ENCODE measurements at regions of chr18 and their contacts with region 1.

Region 1: GRCh38 chr18:45316127-45316526 is 299.1 kb upstream of the SLC14A2 start:
- DNase-seq: no peak
- ATAC-seq: no peak
- H3K4me3 Mint-ChIP-seq: no peak overlapping the region
- H3K27ac Mint-ChIP-seq: no peak overlapping the region
- H3K4me1 Mint-ChIP-seq: no peaks in the 10 kb centered on the region
- H3K27me3 Mint-ChIP-seq: peaks cover 7% of the 10 kb centered on the region

Region 2: GRCh38 chr18:45136381-45137086 is 179.6 kb before region 1 on chr18:
- CTCF ChIA-PET with region 1: no interaction called
- POLR2A ChIA-PET with region 1: no interaction called
- intact Hi-C with region 1: no loop called
- DNase-seq: no peak
- ATAC-seq: no peak
- H3K4me3 Mint-ChIP-seq: no peak overlapping the region
- H3K27ac Mint-ChIP-seq: no peak overlapping the region
- H3K4me1 Mint-ChIP-seq: no peaks in the 10 kb centered on the region
- H3K27me3 Mint-ChIP-seq: no peaks in the 10 kb centered on the region

Region 3: GRCh38 chr18:45291621-45292615 is 24.2 kb before region 1 on chr18:
- CTCF ChIA-PET with region 1: no interaction called
- POLR2A ChIA-PET with region 1: no interaction called
- intact Hi-C with region 1: loop called in 1 of 2 experiments (anchors 2 kb)
- DNase-seq: no peak
- ATAC-seq: no peak
- H3K4me3 Mint-ChIP-seq: no peak overlapping the region
- H3K27ac Mint-ChIP-seq: no peak overlapping the region
- H3K4me1 Mint-ChIP-seq: no peaks in the 10 kb centered on the region
- H3K27me3 Mint-ChIP-seq: no peaks in the 10 kb centered on the region

Region 4: GRCh38 chr18:45526114-45526841 is 210.2 kb after region 1 on chr18:
- CTCF ChIA-PET with region 1: no interaction called
- POLR2A ChIA-PET with region 1: no interaction called
- intact Hi-C with region 1: no loop called
- DNase-seq: no peak
- ATAC-seq: no peak
- H3K4me3 Mint-ChIP-seq: no peak overlapping the region
- H3K27ac Mint-ChIP-seq: no peak overlapping the region
- H3K4me1 Mint-ChIP-seq: no peaks in the 10 kb centered on the region
- H3K27me3 Mint-ChIP-seq: peaks cover 9% of the 10 kb centered on the region

Measured in activated CD4-positive, alpha-beta T cell treated with anti-CD3 and anti-CD28 coated beads for 36 hours (primary cell).